GM12878 (cell line): ENCODE measurements at regions of chr4 and their contacts with region 1.

Region 1: GRCh38 chr4:139099366-139099982 is 77.5 kb downstream of the ELF2 start:
- DNase-seq: peak; percentile 45
- ATAC-seq: peak; percentile 93
- H3K4me3 ChIP-seq: no peak overlapping the region
- H3K27ac ChIP-seq: no peak overlapping the region
- H3K4me1 ChIP-seq: no peaks in the 10 kb centered on the region
- H3K27me3 ChIP-seq: no peaks in the 10 kb centered on the region
- CTCF ChIP-seq: peak; percentile 81 to 88 (median 83)
- EP300 ChIP-seq: no peak
- POLR2A ChIP-seq: no peak
- RAD21 ChIP-seq: peak; percentile 92

Region 2: DNA sequence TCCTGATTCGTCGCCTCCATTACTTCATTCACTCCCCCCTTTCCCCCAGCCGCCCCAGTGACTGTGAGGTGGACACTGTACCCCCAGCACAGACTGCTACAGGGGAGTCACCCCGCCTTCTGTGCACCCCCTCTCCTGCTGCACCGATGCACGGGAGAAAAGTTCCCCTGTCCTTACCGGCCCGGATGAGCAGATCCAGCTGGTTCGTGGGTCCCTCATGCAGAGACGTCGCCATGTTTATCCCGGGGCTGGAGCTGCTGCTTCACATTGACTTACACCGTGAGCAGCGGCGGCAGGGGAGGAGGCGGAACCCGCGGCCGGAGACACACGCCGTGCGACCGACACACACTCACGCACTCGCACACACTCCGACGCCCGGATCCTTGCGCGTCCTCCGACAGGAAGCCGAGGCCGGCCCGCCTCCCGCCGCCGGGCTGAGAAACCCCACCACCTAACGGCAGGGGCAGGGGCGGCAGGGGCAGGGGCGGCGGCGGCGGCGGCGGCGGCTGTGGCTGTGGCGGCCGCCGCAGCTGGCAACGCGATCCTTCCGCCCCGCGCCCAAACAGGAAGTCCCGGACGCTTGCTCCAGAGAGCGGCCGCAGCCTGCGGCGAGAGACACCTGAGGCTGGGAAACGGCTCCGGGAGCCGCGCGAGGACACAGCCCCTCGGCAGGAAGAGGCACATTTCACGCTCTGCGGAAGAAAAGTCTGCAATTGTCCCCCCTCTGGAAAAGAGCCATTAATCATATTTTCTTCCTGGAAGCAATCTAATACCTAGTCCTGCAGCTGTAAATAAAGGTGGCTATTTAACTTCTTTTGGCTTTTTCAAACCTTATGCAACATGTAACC is 15.3 kb before region 1 on chr4:
- CTCF ChIA-PET with region 1: interaction called, 17 read pairs
- POLR2A ChIA-PET with region 1: interaction called, 3 read pairs
- RAD21 ChIA-PET with region 1: interaction called, 5 read pairs
- SMC1A ChIA-PET with region 1: interaction called, 5 read pairs
- in situ Hi-C with region 1: no loop called
- intact Hi-C with region 1: no loop called
- DNase-seq: peak; percentile 62
- ATAC-seq: peak; percentile 77
- H3K4me3 ChIP-seq: peak overlapping the region; percentile 77
- H3K27ac ChIP-seq: peak overlapping the region; percentile 97
- H3K4me1 ChIP-seq: no peaks in the 10 kb centered on the region
- H3K27me3 ChIP-seq: no peaks in the 10 kb centered on the region
- CTCF ChIP-seq: 0 out of 6 replicates have a peak, but pooled peaks of 2 of the 3 experiments have one; percentile 2 to 32
- EP300 ChIP-seq: no peak
- POLR2A ChIP-seq: peak; percentile 87
- RAD21 ChIP-seq: no peak

Region 3: DNA sequence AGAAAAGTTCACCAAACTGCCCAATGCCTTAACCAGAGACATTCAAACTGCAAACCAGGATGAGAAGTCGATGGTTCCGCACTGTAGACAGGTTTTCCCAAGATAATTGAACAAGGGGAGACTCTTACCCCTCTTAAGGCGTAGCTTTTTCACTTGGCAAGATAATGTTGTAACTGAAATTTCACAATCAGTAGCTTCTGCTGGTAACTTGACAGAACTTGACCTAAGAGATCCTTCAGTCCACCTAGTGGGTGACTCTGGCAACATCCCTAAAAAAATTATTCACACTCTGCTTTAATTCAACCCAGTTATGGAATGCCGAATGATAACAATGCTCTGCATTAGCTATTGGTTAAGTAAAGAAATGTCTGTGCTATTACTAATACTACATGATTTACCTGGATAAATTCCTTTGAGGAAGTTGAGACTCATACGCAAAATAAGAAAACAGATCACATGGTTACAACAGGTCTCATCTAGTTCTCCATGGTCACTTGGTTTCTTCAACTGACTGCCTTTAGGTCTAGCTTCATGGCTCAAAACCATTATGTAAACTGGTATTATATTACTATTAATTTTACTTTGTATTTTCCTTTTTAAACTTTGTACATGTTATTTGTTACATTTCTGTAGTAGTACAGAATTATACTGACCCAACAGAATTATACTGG is 68.4 kb after region 1 on chr4:
- CTCF ChIA-PET with region 1: interaction called, 18 read pairs
- POLR2A ChIA-PET with region 1: interaction called, 4 read pairs
- RAD21 ChIA-PET with region 1: interaction called, 4 read pairs
- SMC1A ChIA-PET with region 1: interaction called, 17 read pairs
- in situ Hi-C with region 1: no loop called
- intact Hi-C with region 1: loop called (anchors 1 kb)
- DNase-seq: no peak
- ATAC-seq: peak; percentile 69
- H3K4me3 ChIP-seq: no peak overlapping the region
- H3K27ac ChIP-seq: no peak overlapping the region
- H3K4me1 ChIP-seq: no peaks in the 10 kb centered on the region
- H3K27me3 ChIP-seq: no peaks in the 10 kb centered on the region
- CTCF ChIP-seq: peak; percentile 31 to 42 (median 39); a peak in 4 of 6 replicates
- EP300 ChIP-seq: no peak
- POLR2A ChIP-seq: no peak
- RAD21 ChIP-seq: peak; percentile 64

Region 4: DNA sequence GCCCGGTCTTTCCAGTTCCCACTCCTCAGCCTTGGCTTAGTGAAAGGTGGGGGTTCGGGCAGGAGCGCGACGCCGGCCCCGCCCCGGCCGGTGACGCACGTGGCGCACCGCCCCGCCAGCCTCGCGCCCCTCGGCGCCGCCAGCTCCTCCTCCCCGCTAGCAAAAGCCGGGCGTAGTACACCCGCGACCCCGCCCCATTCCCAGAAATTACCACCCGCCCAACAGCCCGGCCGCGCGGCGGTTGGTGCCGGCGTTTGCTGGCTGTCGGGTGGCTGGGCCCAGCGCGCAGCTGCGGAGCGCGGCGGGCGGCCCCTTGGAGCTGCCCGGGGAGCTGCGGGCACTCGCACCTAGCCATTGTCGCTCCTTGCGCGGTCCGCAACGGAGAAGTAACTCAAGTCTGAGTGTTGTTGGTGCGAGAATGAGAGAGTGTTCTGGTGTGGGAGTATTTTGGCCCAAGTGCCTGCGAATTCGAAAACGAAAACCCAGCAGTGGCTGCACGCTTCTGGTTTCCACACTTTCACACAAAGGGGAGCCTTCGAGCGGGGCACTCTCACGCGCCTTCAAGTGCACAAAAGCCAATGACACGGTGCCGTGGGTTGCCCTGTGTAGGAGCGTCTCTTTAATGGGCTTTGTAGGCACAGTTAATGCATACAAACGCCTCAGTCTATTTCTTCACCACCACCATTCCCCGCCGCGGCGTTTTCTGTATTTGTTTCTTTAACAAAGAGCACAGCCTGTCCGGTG is 78.6 kb after region 1 on chr4:
- CTCF ChIA-PET with region 1: interaction called, 18 read pairs
- POLR2A ChIA-PET with region 1: interaction called, 4 read pairs
- RAD21 ChIA-PET with region 1: interaction called, 14 read pairs
- SMC1A ChIA-PET with region 1: interaction called, 6 read pairs
- in situ Hi-C with region 1: no loop called
- intact Hi-C with region 1: loop called (anchors 5 kb)
- DNase-seq: peak; percentile 48
- ATAC-seq: peak; percentile 74
- H3K4me3 ChIP-seq: peak overlapping the region; percentile 79
- H3K27ac ChIP-seq: peak overlapping the region; percentile 57
- H3K4me1 ChIP-seq: peaks cover 4% of the 10 kb centered on the region; the same call in 1 of the 2 replicates
- H3K27me3 ChIP-seq: peaks cover 2 to 3% of the 10 kb centered on the region in 2 experiments; a peak in 2 of 4 replicates
- CTCF ChIP-seq: no peak
- EP300 ChIP-seq: peak; percentile 13 to 32; a peak in 1 of 4 replicates
- POLR2A ChIP-seq: peak; percentile 81
- RAD21 ChIP-seq: no peak

Region 5: GRCh38 chr4:139184129-139184528 is 84.7 kb after region 1 on chr4:
- CTCF ChIA-PET with region 1: interaction called, 7 read pairs
- POLR2A ChIA-PET with region 1: interaction called, 4 read pairs
- RAD21 ChIA-PET with region 1: no interaction called
- SMC1A ChIA-PET with region 1: interaction called, 3 read pairs
- in situ Hi-C with region 1: no loop called
- intact Hi-C with region 1: loop called (anchors 5 kb)
- DNase-seq: no peak
- ATAC-seq: peak; percentile 81
- H3K4me3 ChIP-seq: no peak overlapping the region
- H3K27ac ChIP-seq: no peak overlapping the region
- H3K4me1 ChIP-seq: no peaks in the 10 kb centered on the region
- H3K27me3 ChIP-seq: peaks cover 0 to 3% of the 10 kb centered on the region in 2 experiments; a peak in 2 of 4 replicates
- CTCF ChIP-seq: peak; percentile 19 to 52 (median 21); a peak in 4 of 6 replicates
- EP300 ChIP-seq: no peak
- POLR2A ChIP-seq: no peak
- RAD21 ChIP-seq: peak; percentile 69

Region 6: GRCh38 chr4:139530833-139531427 is 431.5 kb after region 1 on chr4:
- CTCF ChIA-PET with region 1: interaction called, 6 read pairs
- POLR2A ChIA-PET with region 1: no interaction called
- RAD21 ChIA-PET with region 1: interaction called, 3 read pairs
- SMC1A ChIA-PET with region 1: no interaction called
- in situ Hi-C with region 1: no loop called
- intact Hi-C with region 1: loop called (anchors 2 kb)
- DNase-seq: no peak
- ATAC-seq: peak; percentile 85
- H3K4me3 ChIP-seq: no peak overlapping the region
- H3K27ac ChIP-seq: no peak overlapping the region
- H3K4me1 ChIP-seq: peaks cover 4% of the 10 kb centered on the region; the same call in 1 of the 2 replicates
- H3K27me3 ChIP-seq: no peaks in the 10 kb centered on the region
- CTCF ChIP-seq: peak; percentile 75 to 87 (median 76)
- EP300 ChIP-seq: no peak
- POLR2A ChIP-seq: no peak
- RAD21 ChIP-seq: peak; percentile 81